IMR-90 (cell line): ENCODE measurements at regions of chr16 and their contacts with region 1.

Region 1: DNA sequence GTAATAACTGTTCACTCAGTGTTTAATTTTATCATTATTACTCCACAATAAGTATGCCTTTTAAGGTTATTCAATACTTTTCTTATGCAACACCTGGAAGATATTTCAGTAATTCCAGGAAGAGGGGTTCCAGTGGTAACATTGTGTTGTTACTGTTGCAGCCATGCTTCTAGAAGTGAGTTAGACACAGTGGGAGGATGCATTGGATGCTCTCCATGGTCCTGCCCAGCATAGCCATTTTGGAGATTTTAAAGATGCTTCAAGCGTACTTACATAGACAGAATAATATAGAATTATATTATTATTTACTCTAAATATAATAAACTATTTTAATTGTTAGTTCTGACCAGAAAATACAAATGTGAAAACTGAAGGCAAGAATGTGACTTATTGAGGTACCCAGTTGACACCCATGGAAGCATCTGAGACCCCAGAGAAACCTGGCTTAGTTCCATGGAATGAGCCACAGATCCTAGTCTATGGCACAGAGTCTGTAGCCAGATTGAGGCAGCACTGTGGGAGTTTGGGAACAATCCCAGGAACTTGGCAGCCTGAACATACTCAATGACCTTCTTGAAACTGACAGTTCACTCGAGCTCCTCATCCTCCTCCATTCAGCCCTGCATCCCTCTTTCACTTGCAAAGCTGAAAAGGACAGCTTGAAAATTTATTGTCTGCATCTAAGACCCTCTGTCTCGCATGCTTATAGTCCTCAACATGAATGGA is 190.1 kb upstream of the HS3ST4 start:
- DNase-seq: no peak
- ATAC-seq: no peak
- H3K4me3 ChIP-seq: no peak overlapping the region
- H3K27ac ChIP-seq: no peak overlapping the region
- H3K4me1 ChIP-seq: no peaks in the 10 kb centered on the region
- H3K27me3 ChIP-seq: no peaks in the 10 kb centered on the region
- CTCF ChIP-seq: no peak
- POLR2A ChIP-seq: no peak
- RAD21 ChIP-seq: no peak

Region 2: GRCh38 chr16:25413985-25414384 is 87.7 kb before region 1 on chr16:
- CTCF ChIA-PET with region 1: no interaction called
- POLR2A ChIA-PET with region 1: no interaction called
- dilution Hi-C with region 1: no loop called
- in situ Hi-C with region 1: loop called (anchors 25 kb)
- intact Hi-C with region 1: no loop called
- DNase-seq: no peak
- ATAC-seq: no peak
- H3K4me3 ChIP-seq: no peak overlapping the region
- H3K27ac ChIP-seq: no peak overlapping the region
- H3K4me1 ChIP-seq: no peaks in the 10 kb centered on the region
- H3K27me3 ChIP-seq: no peaks in the 10 kb centered on the region
- CTCF ChIP-seq: no peak
- POLR2A ChIP-seq: no peak
- RAD21 ChIP-seq: no peak